Body of pancreas (tissue), 4 donors: ENCODE measurements at regions of chr2 and their contacts with region 1.

Region 1: GRCh38 chr2:231227309-231228162 is 29.1 kb downstream of the ARMC9 start:
- DNase-seq: peak; percentile 64 to 86 (median 76)
- ATAC-seq: peak; percentile 98
- H3K4me3 ChIP-seq: no peak overlapping the region
- H3K27ac ChIP-seq: peak overlapping the region in 1 of 4 donors; percentile 33
- H3K4me1 ChIP-seq: no peaks in the 10 kb centered on the region
- H3K27me3 ChIP-seq: no peaks in the 10 kb centered on the region
- CTCF ChIP-seq: peak; percentile 62 to 93 (median 92)
- POLR2A ChIP-seq: no peak

Region 2: DNA sequence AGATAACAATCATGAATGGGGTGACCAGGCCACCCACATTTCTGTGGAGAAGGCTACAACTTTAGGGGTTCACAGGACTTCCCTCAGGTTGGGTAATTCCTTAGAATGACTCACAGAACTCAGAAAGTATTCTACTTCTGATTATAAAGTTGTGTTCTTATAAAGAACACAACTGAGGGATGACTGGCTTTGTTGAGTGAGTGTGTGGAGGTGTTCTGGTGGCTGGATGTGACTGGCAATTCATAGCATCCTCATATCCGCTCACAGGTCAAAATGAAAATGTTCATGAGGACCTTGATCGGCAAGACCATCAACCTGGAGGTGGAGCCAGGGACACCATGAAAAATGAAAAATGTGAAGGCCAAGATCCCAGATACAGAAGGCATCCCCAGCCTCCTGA is 658.2 kb before region 1 on chr2:
- intact Hi-C with region 1: no loop called
- DNase-seq: no peak
- ATAC-seq: no peak
- H3K4me3 ChIP-seq: no peak overlapping the region
- H3K27ac ChIP-seq: no peak overlapping the region
- H3K4me1 ChIP-seq: no peaks in the 10 kb centered on the region
- H3K27me3 ChIP-seq: no peaks in the 10 kb centered on the region
- CTCF ChIP-seq: no peak
- POLR2A ChIP-seq: no peak

Region 3: GRCh38 chr2:231411831-231412617 is 184.5 kb after region 1 on chr2:
- intact Hi-C with region 1: loop called (anchors 10 kb)
- DNase-seq: peak; percentile 92 to 94 (median 92)
- ATAC-seq: peak; percentile 95
- H3K4me3 ChIP-seq: peak overlapping the region; percentile 36 to 58
- H3K27ac ChIP-seq: peak overlapping the region; percentile 75 to 94 (median 86)
- H3K4me1 ChIP-seq: peaks cover 76% of the 10 kb centered on the region
- H3K27me3 ChIP-seq: no peaks in the 10 kb centered on the region
- CTCF ChIP-seq: peak; percentile 75 to 97 (median 95)
- POLR2A ChIP-seq: peak; percentile 49 to 75 (median 67)